Ascending aorta (tissue), 2 donors: ENCODE measurements at regions of chr3 and their contacts with region 1.

Region 1: DNA sequence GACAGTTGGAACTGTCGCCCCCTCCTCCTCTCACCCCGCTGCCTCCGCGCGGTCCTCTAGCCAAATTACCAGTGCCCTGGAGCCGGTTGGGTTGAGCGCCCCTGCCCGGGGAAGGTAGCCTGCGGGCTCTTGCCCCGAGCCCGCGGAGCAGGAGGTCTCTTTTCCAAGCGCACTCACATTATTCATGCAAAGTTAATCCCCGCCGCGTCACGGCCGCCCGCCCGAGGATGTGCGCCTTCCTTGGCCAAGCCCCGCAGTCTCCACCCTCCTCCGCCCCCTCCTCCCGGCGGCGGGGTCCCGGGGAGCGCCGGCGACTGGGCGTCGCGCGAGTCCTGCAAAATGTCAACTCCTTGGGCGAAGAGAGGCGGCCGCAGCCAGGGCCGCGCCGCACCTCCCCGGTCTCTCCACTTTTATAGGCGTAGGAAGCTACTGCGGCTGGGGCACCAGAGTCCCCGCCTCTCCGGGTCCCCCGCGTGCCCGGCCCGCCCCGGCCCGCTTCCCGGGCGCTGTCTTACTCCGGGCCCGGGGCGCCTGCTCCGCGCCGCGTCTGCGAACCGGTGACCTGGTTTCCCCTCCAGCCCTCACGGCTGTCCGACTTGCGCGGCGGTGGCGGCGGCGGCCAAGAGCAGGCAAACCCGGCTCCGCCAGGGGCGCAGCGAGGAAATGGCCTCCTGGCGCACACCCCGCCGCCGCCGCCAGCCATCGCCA is at the start of gene THRB:
- DNase-seq: peak; percentile 33 to 88
- H3K4me3 ChIP-seq: peak within 1 kb of the TSS; percentile 72 to 90
- H3K27ac ChIP-seq: peak within 1 kb of the TSS; percentile 99
- H3K4me1 ChIP-seq: peaks cover 0 to 21% of the 10 kb centered on the region in 2 donors
- H3K27me3 ChIP-seq: no peaks in the 10 kb centered on the region
- CTCF ChIP-seq: peak in 2 of 3 experiments; percentile 17 to 44
- total RNA-seq, gene THRB: 24.7 TPM

Region 2: DNA sequence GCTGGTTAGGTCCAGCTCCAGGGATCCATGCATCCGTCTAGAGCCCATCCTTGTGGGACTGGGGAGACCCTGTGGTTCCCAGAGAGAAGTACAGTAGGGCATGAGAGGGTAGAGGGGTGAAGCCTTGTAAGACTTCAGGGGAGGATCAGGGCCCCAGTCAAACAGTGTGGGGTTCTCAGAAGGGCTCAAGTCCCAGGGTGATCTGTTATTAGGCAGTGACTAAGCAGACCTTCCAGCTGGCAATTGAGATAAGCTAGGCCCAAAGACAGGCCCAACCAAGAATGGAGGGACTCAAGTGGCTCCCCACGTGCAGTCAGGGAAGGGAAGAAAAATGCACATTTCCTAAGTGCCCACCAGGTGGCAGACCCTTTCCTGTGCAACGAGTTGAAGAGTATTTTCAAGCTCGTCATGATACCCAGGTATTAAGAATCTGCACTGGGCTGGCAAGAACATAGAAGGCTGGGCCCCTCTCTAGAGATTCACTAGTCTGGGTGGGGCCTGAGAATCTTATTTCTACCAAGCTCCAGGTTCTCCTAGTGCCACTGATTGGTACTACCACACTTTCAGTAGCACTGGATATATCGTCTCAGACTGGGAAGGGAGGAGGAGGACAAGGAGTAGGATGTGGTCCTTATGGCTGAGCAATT is 308.9 kb before region 1 on chr3:
- intact Hi-C with region 1: loop called (anchors 5 kb)
- DNase-seq: peak in 1 of 2 donors; percentile 69
- H3K4me3 ChIP-seq: no peak overlapping the region
- H3K27ac ChIP-seq: peak overlapping the region; percentile 66 to 87
- H3K4me1 ChIP-seq: peaks cover 0 to 36% of the 10 kb centered on the region in 2 donors
- H3K27me3 ChIP-seq: no peaks in the 10 kb centered on the region
- CTCF ChIP-seq: peak; percentile 54 to 65 (median 58)

Region 3: DNA sequence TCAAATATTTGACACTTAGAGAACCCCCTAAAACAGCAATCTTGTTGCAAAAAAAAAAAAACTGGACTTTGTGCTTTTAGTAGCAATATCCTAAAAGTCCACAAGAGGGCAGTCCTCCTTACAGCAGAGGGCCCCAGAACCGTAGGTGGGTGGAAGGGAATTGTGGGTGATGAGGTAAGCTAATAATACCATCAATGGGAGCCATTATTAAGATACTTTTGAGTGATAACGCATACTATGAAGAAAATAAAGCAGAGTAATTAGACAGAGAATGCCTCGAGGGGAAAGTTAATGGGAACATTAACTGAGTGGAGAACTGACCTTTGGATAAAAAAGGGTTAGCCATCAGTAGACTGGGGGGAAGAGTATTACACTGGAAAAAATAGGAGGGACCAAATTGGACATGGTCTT is 230.0 kb before region 1 on chr3:
- intact Hi-C with region 1: loop called (anchors 5 kb)
- DNase-seq: no peak
- H3K4me3 ChIP-seq: no peak overlapping the region
- H3K27ac ChIP-seq: no peak overlapping the region
- H3K4me1 ChIP-seq: peaks cover 0 to 24% of the 10 kb centered on the region in 2 donors
- H3K27me3 ChIP-seq: no peaks in the 10 kb centered on the region
- CTCF ChIP-seq: peak; percentile 51 to 67 (median 55)

Region 4: DNA sequence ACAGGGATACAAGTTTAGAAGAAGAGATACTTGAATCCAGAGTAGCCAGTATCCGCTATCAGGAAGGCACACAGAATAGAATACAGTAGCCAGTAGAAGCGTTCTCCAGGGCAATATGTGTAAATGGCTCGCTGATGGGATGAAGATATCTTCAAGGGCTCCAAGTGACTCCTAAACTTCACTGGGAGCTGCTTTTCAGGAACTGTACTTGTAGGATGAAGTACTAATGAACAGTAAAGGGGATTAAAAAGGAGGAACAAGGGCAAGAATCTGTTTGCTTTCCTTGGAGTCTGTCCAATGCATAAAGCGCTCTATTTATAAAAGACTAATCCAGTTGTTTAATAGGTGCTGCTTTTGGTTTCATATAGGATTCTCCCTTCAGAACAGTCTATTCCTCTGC is 78.5 kb before region 1 on chr3:
- intact Hi-C with region 1: loop called (anchors 5 kb)
- DNase-seq: no peak
- H3K4me3 ChIP-seq: no peak overlapping the region
- H3K27ac ChIP-seq: no peak overlapping the region
- H3K4me1 ChIP-seq: peaks cover 5 to 23% of the 10 kb centered on the region in 2 donors
- H3K27me3 ChIP-seq: no peaks in the 10 kb centered on the region
- CTCF ChIP-seq: no peak

Region 5: DNA sequence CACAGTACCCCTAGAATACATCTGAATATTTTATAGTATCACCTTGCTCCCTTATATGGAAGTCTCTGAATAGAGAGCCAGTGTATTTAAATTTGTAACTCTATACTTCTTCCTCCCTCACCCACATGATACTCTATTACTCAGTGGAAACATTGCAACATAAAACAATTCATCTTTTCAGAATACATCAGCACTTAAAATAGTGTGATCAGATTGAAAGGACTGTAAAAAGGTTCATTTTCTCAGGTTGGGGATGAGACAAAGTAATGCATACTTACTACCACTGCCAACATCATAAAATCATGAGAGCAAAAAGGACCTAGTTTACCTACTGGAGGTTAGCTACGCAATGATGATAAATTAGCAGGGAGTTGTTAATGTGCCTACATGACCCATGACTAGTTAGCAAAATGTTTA is 13.7 kb after region 1 on chr3:
- intact Hi-C with region 1: no loop called
- DNase-seq: no peak
- H3K4me3 ChIP-seq: no peak overlapping the region
- H3K27ac ChIP-seq: peak overlapping the region; percentile 37 to 46
- H3K4me1 ChIP-seq: peaks cover 0 to 12% of the 10 kb centered on the region in 2 donors
- H3K27me3 ChIP-seq: no peaks in the 10 kb centered on the region
- CTCF ChIP-seq: no peak

Region 6: GRCh38 chr3:24566927-24567326 is 72.2 kb after region 1 on chr3:
- intact Hi-C with region 1: no loop called
- DNase-seq: no peak
- H3K4me3 ChIP-seq: no peak overlapping the region
- H3K27ac ChIP-seq: no peak overlapping the region
- H3K4me1 ChIP-seq: no peaks in the 10 kb centered on the region
- H3K27me3 ChIP-seq: no peaks in the 10 kb centered on the region
- CTCF ChIP-seq: no peak